ENCODE measurements at regions of chr5 and their contacts with region 1.

Region 1: GRCh38 chr5:178461004-178461730 is 129.0 kb downstream of the COL23A1 start:
- DNase-seq: peak; percentile 86
- ATAC-seq: peak; percentile 93

Region 2: DNA sequence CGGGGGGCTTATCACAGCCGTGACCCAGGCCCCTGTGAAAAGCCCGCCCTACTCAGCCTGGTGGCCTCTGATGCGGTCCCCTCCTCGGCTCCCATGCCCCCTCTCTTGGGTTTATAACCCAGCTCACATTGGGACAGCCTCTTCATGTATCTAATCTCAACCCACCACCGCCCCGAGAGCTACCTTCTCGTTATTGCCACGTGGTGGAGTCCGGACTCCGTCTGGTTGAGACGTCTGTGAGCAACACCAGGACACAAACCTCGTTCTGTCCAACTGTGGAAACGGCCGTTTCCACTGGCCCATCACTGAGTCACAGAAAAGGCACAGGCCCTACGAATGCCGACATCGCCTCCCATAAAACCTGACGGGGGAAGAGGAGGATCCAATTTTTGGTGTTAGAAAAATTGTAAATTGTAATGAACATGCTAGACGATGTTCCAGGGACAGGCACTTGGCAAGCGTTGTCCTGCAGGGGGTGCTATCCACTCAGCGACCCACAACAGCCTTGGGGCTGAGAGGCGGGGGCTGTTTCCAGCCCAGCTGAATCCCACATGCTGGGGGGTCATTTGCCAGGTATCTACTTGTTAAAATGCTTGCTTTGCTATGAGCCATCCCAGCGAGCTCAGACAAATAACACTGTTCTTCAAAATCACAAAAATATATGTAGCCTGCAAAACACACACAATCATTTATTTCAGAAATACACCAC is 385.2 kb before region 1 on chr5:
- intact Hi-C with region 1: no loop called
- DNase-seq: peak; percentile 79
- ATAC-seq: peak; percentile 86

Region 3: GRCh38 chr5:178279725-178280438 is 181.3 kb before region 1 on chr5:
- intact Hi-C with region 1: loop called (anchors 5 kb)
- DNase-seq: peak; percentile 94
- ATAC-seq: peak; percentile 84

Region 4: DNA sequence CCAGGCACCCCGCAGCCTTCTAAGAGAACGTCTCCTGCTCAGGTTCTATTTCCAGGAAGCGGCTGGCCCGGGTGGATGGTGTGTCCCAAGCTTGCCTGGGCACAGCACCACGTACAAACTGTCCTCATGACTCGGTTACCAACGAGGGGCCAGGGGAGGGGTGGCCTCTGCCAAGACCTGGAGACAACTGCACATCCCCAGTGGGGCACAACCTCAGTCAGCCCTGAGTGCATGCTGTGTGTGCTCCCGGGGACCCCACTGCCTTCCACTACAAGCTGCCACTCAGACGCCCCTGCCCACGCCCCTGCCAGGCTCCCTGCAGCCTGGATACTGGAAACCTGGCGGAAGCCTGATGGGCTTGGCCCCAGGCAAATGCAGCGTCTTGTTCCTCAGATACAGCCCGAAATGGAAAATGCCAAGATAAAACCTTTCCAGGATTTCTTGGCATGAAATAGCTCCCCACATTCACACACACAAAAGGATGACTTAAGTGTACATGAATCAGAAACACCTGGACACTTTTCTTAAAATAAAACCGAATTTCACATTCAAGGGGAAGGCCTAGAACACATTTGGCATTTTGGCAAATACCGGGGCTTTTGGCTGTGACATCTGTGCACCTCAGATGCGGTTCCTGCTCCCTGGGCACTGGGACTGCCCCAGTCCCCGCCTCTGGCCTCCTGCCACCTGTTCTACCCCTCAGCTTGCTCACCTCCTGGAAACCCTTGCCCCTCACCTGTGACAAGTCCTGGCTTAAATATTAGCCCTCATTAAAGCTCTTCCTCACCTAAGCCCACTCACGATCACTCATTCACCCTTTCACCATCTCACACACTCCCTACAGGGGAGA is 66.5 kb after region 1 on chr5:
- intact Hi-C with region 1: loop called (anchors 1 kb)
- DNase-seq: peak; percentile 85
- ATAC-seq: peak; percentile 93

Region 5: GRCh38 chr5:178551059-178551458 is 89.9 kb after region 1 on chr5:
- intact Hi-C with region 1: loop called (anchors 1 kb)
- DNase-seq: no peak
- ATAC-seq: no peak

Measured in Right ventricle myocardium inferior (tissue), 1 donor.